ENCODE measurements at regions of chr14 and their contacts with region 1.

Region 1: DNA sequence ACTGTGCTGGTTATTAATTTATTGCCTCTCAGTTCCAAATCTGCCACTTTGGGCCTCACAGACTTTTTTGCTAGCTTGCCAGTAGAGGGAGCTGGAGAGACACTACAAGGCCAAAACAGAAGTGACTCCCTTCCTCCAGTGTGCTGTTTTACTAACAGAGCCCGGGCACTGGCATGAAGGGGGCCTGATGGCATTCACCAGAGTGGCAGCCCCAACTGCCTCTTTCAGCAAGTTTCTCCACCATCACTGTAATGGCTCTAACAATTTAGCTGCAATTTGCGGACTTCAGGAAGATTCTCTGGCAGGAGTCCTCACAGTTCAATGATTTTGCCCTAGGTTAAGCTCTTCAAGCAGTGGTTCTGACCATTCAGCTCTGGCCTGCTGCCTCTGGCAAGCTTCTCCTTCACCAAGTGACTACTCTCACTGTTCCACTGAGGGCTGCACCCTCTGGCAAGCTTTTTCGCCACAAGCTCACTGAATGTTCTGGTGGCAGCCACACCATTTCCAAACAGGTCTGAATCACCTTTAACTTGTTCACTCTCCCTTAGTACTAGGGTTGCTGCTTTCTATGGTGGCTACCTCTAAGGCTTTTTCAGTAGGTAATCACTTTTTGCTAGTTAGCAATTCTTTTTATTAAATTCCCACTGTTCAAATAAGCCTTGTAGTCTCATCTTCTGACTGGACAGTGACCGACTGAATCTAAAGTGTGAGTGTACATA is 104.9 kb downstream of the ZC3H14 start:
- DNase-seq: peak; percentile 87
- H3K4me3 Mint-ChIP-seq: no peak overlapping the region
- H3K27ac Mint-ChIP-seq: no peak overlapping the region
- H3K4me1 Mint-ChIP-seq: no peaks in the 10 kb centered on the region
- H3K27me3 Mint-ChIP-seq: no peaks in the 10 kb centered on the region
- CTCF ChIP-seq: peak; percentile 84

Region 2: GRCh38 chr14:88568196-88568595 is 99.5 kb before region 1 on chr14:
- CTCF ChIA-PET with region 1: no interaction called
- POLR2A ChIA-PET with region 1: no interaction called
- intact Hi-C with region 1: no loop called
- DNase-seq: no peak
- H3K4me3 Mint-ChIP-seq: no peak overlapping the region
- H3K27ac Mint-ChIP-seq: no peak overlapping the region
- H3K4me1 Mint-ChIP-seq: peaks cover 11% of the 10 kb centered on the region
- H3K27me3 Mint-ChIP-seq: no peaks in the 10 kb centered on the region
- CTCF ChIP-seq: no peak

Region 3: GRCh38 chr14:88584451-88584850 is 83.3 kb before region 1 on chr14:
- CTCF ChIA-PET with region 1: no interaction called
- POLR2A ChIA-PET with region 1: no interaction called
- intact Hi-C with region 1: no loop called
- DNase-seq: no peak
- H3K4me3 Mint-ChIP-seq: no peak overlapping the region
- H3K27ac Mint-ChIP-seq: no peak overlapping the region
- H3K4me1 Mint-ChIP-seq: no peaks in the 10 kb centered on the region
- H3K27me3 Mint-ChIP-seq: no peaks in the 10 kb centered on the region
- CTCF ChIP-seq: no peak

Region 4: GRCh38 chr14:88682495-88683114 is 14.9 kb after region 1 on chr14:
- CTCF ChIA-PET with region 1: interaction called, 26 read pairs
- POLR2A ChIA-PET with region 1: interaction called, 3 read pairs
- intact Hi-C with region 1: no loop called
- DNase-seq: no peak
- H3K4me3 Mint-ChIP-seq: no peak overlapping the region
- H3K27ac Mint-ChIP-seq: no peak overlapping the region
- H3K4me1 Mint-ChIP-seq: no peaks in the 10 kb centered on the region
- H3K27me3 Mint-ChIP-seq: no peaks in the 10 kb centered on the region
- CTCF ChIP-seq: no peak

Region 5: GRCh38 chr14:88824314-88825077 is 156.8 kb after region 1 on chr14 and contains the start of gene TTC8:
- CTCF ChIA-PET with region 1: interaction called, 5 read pairs
- POLR2A ChIA-PET with region 1: interaction called, 10 read pairs
- intact Hi-C with region 1: loop called (anchors 1 kb)
- DNase-seq: peak; percentile 87
- H3K4me3 Mint-ChIP-seq: peak within 1 kb of the TSS; percentile 72
- H3K27ac Mint-ChIP-seq: peak within 1 kb of the TSS; percentile 100
- H3K4me1 Mint-ChIP-seq: peaks cover 8% of the 10 kb centered on the region
- H3K27me3 Mint-ChIP-seq: no peaks in the 10 kb centered on the region
- CTCF ChIP-seq: no peak
- total RNA-seq, gene TTC8: 20.9 and 23.9 TPM in 2 replicates

Region 6: GRCh38 chr14:88856786-88857366 is 189.2 kb after region 1 on chr14:
- CTCF ChIA-PET with region 1: interaction called, 27 read pairs
- POLR2A ChIA-PET with region 1: no interaction called
- intact Hi-C with region 1: no loop called
- DNase-seq: no peak
- H3K4me3 Mint-ChIP-seq: no peak overlapping the region
- H3K27ac Mint-ChIP-seq: no peak overlapping the region
- H3K4me1 Mint-ChIP-seq: no peaks in the 10 kb centered on the region
- H3K27me3 Mint-ChIP-seq: no peaks in the 10 kb centered on the region
- CTCF ChIP-seq: no peak

Region 7: GRCh38 chr14:89013084-89013504 is 345.4 kb after region 1 on chr14:
- CTCF ChIA-PET with region 1: interaction called, 3 read pairs
- POLR2A ChIA-PET with region 1: no interaction called
- intact Hi-C with region 1: loop called (anchors 1 kb)
- DNase-seq: peak; percentile 33
- H3K4me3 Mint-ChIP-seq: no peak overlapping the region
- H3K27ac Mint-ChIP-seq: no peak overlapping the region
- H3K4me1 Mint-ChIP-seq: no peaks in the 10 kb centered on the region
- H3K27me3 Mint-ChIP-seq: no peaks in the 10 kb centered on the region
- CTCF ChIP-seq: no peak

Region 8: GRCh38 chr14:89416002-89416995 is 748.6 kb after region 1 on chr14:
- CTCF ChIA-PET with region 1: no interaction called
- POLR2A ChIA-PET with region 1: no interaction called
- intact Hi-C with region 1: no loop called
- DNase-seq: peak; percentile 98
- H3K4me3 Mint-ChIP-seq: peak overlapping the region; percentile 90
- H3K27ac Mint-ChIP-seq: peak overlapping the region; percentile 82
- H3K4me1 Mint-ChIP-seq: peaks cover 20% of the 10 kb centered on the region
- H3K27me3 Mint-ChIP-seq: no peaks in the 10 kb centered on the region
- CTCF ChIP-seq: no peak